ENCODE measurements at regions of chr15 and their contacts with region 1.

Region 1: GRCh38 chr15:91271565-91272153 is 171.6 kb downstream of the SV2B start:
- DNase-seq: peak; percentile 69
- H3K4me3 Mint-ChIP-seq: no peak overlapping the region
- H3K27ac Mint-ChIP-seq: no peak overlapping the region
- H3K4me1 Mint-ChIP-seq: peaks cover 9% of the 10 kb centered on the region
- H3K27me3 Mint-ChIP-seq: peaks cover 44% of the 10 kb centered on the region
- CTCF ChIP-seq: peak; percentile 85

Region 2: DNA sequence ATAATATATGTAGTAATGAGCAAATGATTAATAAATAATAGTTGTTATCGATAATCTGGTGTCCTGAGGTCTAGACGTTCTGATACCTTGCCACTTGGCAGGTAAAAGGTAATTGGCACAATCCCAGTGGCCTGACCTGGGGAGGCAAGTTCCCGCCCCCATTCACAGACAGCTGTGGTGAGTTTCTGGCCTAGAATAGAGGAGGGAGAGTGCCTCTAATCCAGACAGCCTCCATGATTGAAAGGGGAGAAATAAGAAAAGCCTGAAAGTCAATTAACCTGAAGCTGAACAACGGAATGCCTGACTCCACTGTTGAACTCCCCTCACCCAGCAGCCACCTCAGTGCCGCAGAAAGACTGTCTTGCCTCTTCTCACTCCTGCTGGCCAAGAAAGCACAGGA is 209.7 kb before region 1 on chr15:
- CTCF ChIA-PET with region 1: interaction called, 82 read pairs
- POLR2A ChIA-PET with region 1: interaction called, 22 read pairs
- intact Hi-C with region 1: no loop called
- DNase-seq: no peak
- H3K4me3 Mint-ChIP-seq: no peak overlapping the region
- H3K27ac Mint-ChIP-seq: no peak overlapping the region
- H3K4me1 Mint-ChIP-seq: peaks cover 17% of the 10 kb centered on the region
- H3K27me3 Mint-ChIP-seq: peaks cover 13% of the 10 kb centered on the region
- CTCF ChIP-seq: no peak

Region 3: GRCh38 chr15:91068966-91069365 is 202.7 kb before region 1 on chr15:
- CTCF ChIA-PET with region 1: interaction called, 20 read pairs
- POLR2A ChIA-PET with region 1: interaction called, 4 read pairs
- intact Hi-C with region 1: no loop called
- DNase-seq: no peak
- H3K4me3 Mint-ChIP-seq: no peak overlapping the region
- H3K27ac Mint-ChIP-seq: no peak overlapping the region
- H3K4me1 Mint-ChIP-seq: peaks cover 23% of the 10 kb centered on the region
- H3K27me3 Mint-ChIP-seq: no peaks in the 10 kb centered on the region
- CTCF ChIP-seq: no peak

Region 4: GRCh38 chr15:91224755-91225380 is 46.8 kb before region 1 on chr15:
- CTCF ChIA-PET with region 1: interaction called, 30 read pairs
- POLR2A ChIA-PET with region 1: no interaction called
- intact Hi-C with region 1: loop called (anchors 1 kb)
- DNase-seq: peak; percentile 68
- H3K4me3 Mint-ChIP-seq: no peak overlapping the region
- H3K27ac Mint-ChIP-seq: no peak overlapping the region
- H3K4me1 Mint-ChIP-seq: no peaks in the 10 kb centered on the region
- H3K27me3 Mint-ChIP-seq: peaks cover 62% of the 10 kb centered on the region
- CTCF ChIP-seq: peak; percentile 60

Region 5: GRCh38 chr15:91231703-91232372 is 39.8 kb before region 1 on chr15:
- CTCF ChIA-PET with region 1: interaction called, 30 read pairs
- POLR2A ChIA-PET with region 1: no interaction called
- intact Hi-C with region 1: no loop called
- DNase-seq: no peak
- H3K4me3 Mint-ChIP-seq: no peak overlapping the region
- H3K27ac Mint-ChIP-seq: no peak overlapping the region
- H3K4me1 Mint-ChIP-seq: no peaks in the 10 kb centered on the region
- H3K27me3 Mint-ChIP-seq: peaks cover 61% of the 10 kb centered on the region
- CTCF ChIP-seq: no peak

Region 6: GRCh38 chr15:91246998-91247397 is 24.7 kb before region 1 on chr15:
- CTCF ChIA-PET with region 1: interaction called, 17 read pairs
- POLR2A ChIA-PET with region 1: no interaction called
- intact Hi-C with region 1: loop called (anchors 2 kb)
- DNase-seq: no peak
- H3K4me3 Mint-ChIP-seq: no peak overlapping the region
- H3K27ac Mint-ChIP-seq: no peak overlapping the region
- H3K4me1 Mint-ChIP-seq: no peaks in the 10 kb centered on the region
- H3K27me3 Mint-ChIP-seq: peaks cover 31% of the 10 kb centered on the region
- CTCF ChIP-seq: no peak

Region 7: DNA sequence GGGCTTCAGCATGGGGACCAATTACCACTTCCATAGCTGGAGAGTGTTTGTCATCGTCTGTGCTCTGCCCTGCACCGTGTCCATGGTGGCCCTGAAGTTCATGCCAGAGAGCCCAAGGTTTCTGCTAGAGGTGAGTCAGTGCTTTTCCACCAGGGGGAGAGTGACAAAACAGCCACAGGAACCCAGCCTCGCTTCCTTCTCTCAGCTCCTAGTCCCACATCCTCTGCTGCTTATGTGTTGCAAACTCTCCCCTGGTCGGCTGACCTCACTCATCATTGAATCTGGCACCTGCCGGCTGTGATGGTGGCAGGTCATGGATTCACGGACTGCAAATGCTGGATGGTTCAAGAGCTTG is 13.3 kb before region 1 on chr15:
- CTCF ChIA-PET with region 1: interaction called, 12 read pairs
- POLR2A ChIA-PET with region 1: no interaction called
- intact Hi-C with region 1: no loop called
- DNase-seq: peak; percentile 18
- H3K4me3 Mint-ChIP-seq: no peak overlapping the region
- H3K27ac Mint-ChIP-seq: no peak overlapping the region
- H3K4me1 Mint-ChIP-seq: no peaks in the 10 kb centered on the region
- H3K27me3 Mint-ChIP-seq: peaks cover 23% of the 10 kb centered on the region
- CTCF ChIP-seq: no peak